ENCODE measurements at regions of chr1 and their contacts with region 1.

Region 1: DNA sequence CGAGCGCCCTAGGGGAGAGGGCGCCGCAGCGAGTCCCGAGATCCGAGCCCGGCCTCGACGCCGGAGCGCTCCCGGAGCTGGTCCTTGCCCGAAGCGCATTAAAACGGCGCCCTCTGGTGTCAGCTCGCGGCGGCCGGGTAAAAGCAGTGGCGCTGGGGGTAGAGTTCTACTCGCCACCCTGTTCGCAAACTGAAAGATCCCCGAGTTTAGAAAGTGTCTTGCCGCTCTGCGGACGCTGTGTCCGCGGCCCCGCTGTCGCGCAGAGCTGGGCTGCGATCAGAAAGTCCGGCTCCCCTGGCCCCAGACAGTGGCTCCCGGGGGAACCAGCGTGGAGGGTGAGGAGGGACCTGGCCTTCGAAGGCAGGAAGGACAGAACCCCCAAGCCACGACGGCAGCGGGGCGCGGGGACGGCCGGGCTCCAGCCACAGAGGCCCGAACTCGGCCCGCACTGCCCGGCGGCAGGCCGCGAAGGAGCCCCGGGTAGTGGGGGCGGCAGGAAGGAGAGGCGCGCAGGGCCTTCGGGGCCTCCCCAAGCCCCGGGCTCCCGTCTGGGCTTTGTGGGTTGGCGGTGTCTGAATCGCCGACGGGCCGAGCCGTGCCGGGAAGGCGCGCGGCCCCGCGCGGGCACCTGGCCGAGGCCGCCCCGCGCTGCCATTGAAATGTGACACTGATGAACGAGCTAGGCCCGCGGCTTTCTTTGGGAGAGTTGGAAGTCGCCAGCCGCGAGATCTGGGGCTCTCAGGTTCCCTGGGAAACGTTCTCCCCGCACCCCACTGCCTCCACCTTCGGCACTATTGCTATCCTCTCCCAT is 39.1 kb upstream of the NFIA start:
- DNase-seq: peak; percentile 84 to 94 (median 93)
- ATAC-seq: peak; percentile 98
- H3K4me3 ChIP-seq: no peak overlapping the region
- H3K4me1 ChIP-seq: no peaks in the 10 kb centered on the region
- CTCF ChIP-seq: peak; percentile 74

Region 2: GRCh38 chr1:59971464-59971911 is 1071.7 kb before region 1 on chr1:
- intact Hi-C with region 1: loop called (anchors 5 to 10 kb)
- DNase-seq: peak; percentile 73 to 83 (median 78)
- ATAC-seq: peak; percentile 93
- H3K4me3 ChIP-seq: no peak overlapping the region
- H3K4me1 ChIP-seq: peaks cover 13% of the 10 kb centered on the region
- CTCF ChIP-seq: peak; percentile 75

Measured in mucosa of descending colon (tissue), 3 donors.